AG04449 (cell line): ENCODE measurements at regions of chr1 and their contacts with region 1.

Region 1: GRCh38 chr1:246699095-246699735 is 25.0 kb upstream of the SCCPDH start:
- DNase-seq: peak; percentile 89
- H3K4me3 ChIP-seq: peak overlapping the region; percentile 36
- CTCF ChIP-seq: peak; percentile 75

Region 2: DNA sequence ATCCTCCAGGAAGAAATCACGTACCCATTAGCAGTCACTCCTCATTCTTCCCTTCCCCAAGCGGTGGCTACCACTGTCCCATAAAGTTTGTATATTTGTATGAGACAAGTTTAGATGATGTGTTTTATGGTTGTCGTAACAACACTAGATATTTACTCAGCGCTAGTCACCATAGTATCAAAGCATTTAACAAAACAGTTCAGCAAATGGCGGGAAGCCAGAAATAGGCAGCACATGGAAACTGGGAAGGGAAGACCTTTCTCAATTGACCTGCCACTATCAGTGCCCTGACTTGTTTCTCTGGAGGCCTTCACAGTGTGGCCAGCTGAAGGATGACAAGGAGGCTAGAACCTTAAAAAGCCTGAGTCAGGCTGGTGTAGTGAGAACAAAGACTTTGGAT is 101.9 kb before region 1 on chr1:
- CTCF ChIA-PET with region 1: no interaction called
- POLR2A ChIA-PET with region 1: no interaction called
- DNase-seq: peak; percentile 34
- H3K4me3 ChIP-seq: no peak overlapping the region
- CTCF ChIP-seq: no peak

Region 3: DNA sequence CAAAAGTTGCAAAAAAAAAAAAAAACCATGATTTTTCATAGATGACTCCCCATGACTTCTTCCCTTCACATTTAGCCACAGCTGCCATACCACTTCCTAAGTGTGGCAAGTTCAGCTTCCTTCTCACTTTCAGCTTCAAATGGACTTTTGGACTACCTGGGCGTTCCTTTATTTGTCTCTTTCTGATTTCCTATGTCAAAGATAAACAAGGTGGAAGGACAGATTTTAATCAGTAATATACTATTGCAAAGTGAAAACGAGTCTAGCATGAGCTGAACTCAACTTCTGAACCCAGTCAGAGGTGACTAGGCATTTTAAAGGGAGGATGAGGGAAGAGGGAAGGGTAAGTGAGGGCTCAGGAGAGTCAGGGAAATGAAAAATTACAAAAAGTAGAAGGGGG is 10.6 kb after region 1 on chr1:
- CTCF ChIA-PET with region 1: interaction called, 10 read pairs
- POLR2A ChIA-PET with region 1: no interaction called
- DNase-seq: no peak
- H3K4me3 ChIP-seq: no peak overlapping the region
- CTCF ChIP-seq: no peak